ENCODE measurements at regions of chr10 and their contacts with region 1.

Region 1: GRCh38 chr10:80444646-80445319 is 9.3 kb upstream of the TSPAN14 start:
- DNase-seq: peak; percentile 71
- H3K4me3 ChIP-seq: no peak overlapping the region
- H3K27ac ChIP-seq: no peak overlapping the region
- H3K4me1 ChIP-seq: no peaks in the 10 kb centered on the region
- H3K27me3 ChIP-seq: no peaks in the 10 kb centered on the region
- CTCF ChIP-seq: peak; percentile 71

Region 2: DNA sequence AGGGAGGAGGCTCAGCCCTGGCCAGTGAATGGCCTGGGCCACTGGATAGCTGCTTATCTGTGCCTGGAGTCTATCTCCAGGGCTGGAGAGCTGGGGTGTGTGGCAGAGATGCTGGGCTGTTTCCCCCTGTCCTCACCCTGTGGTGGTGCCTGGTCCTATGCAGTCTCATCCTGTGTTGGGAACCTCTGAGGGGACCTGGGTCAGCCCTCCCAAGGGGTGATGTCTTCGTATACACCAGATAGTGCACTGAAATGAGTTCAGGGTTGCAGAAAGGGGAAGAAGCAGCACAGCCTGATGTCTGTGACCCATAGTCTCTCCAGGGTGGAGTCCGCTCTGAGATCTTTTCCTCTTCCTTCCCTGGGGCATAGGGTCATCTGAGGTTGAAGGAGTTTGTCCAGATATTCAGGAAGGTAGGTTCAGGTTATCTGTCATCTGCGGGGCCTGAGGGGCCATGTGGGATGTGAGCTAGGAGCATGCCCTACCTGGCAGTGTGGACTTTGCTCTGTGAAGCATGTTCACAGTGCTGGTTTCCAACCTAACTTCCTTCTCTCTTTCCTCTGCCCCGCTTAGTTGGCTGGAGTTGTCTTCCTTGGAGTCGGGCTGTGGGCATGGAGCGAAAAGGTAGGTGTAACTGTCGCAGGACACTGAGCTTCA is 59.5 kb after region 1 on chr10:
- intact Hi-C with region 1: loop called (anchors 1 kb)
- DNase-seq: peak; percentile 68
- H3K4me3 ChIP-seq: no peak overlapping the region
- H3K27ac ChIP-seq: peak overlapping the region; percentile 50
- H3K4me1 ChIP-seq: peaks cover 27% of the 10 kb centered on the region
- H3K27me3 ChIP-seq: no peaks in the 10 kb centered on the region
- CTCF ChIP-seq: no peak

Measured in colonic mucosa (tissue), 4 donors.